GM12878 (cell line): ENCODE measurements at regions of chr9 and their contacts with region 1.

Region 1: GRCh38 chr9:17116400-17116837 is 18.4 kb upstream of the CNTLN start:
- DNase-seq: no peak
- ATAC-seq: no peak
- H3K4me3 ChIP-seq: no peak overlapping the region
- H3K27ac ChIP-seq: no peak overlapping the region
- H3K4me1 ChIP-seq: no peaks in the 10 kb centered on the region
- H3K27me3 ChIP-seq: no peaks in the 10 kb centered on the region
- CTCF ChIP-seq: peak in 1 of 3 experiments; percentile 15; a peak in 2 of 6 replicates
- EP300 ChIP-seq: no peak
- POLR2A ChIP-seq: no peak
- RAD21 ChIP-seq: no peak

Region 2: DNA sequence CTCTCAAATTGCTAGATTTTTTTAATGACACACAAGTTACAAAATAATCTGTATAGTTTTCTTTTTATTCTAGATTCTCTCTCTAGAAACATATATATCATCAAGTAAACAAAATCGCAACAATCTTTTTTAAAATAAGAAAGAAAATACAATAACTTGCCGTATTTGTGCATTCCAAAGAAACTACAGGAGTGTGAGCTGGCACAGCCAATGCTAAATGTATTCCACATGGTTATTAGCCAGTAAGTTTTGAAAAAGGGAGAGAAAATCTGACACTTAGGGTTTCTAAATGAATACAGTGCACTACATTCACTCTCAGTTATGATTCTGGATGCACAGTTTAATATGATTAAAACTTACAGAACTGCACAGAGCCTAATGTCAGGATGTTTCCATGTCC is 363.8 kb before region 1 on chr9:
- CTCF ChIA-PET with region 1: no interaction called
- POLR2A ChIA-PET with region 1: no interaction called
- RAD21 ChIA-PET with region 1: no interaction called
- SMC1A ChIA-PET with region 1: no interaction called
- in situ Hi-C with region 1: no loop called
- intact Hi-C with region 1: loop called (anchors 5 kb)
- DNase-seq: no peak
- ATAC-seq: no peak
- H3K4me3 ChIP-seq: no peak overlapping the region
- H3K27ac ChIP-seq: no peak overlapping the region
- H3K4me1 ChIP-seq: no peaks in the 10 kb centered on the region
- H3K27me3 ChIP-seq: no peaks in the 10 kb centered on the region
- CTCF ChIP-seq: no peak
- EP300 ChIP-seq: no peak
- POLR2A ChIP-seq: no peak
- RAD21 ChIP-seq: no peak

Region 3: DNA sequence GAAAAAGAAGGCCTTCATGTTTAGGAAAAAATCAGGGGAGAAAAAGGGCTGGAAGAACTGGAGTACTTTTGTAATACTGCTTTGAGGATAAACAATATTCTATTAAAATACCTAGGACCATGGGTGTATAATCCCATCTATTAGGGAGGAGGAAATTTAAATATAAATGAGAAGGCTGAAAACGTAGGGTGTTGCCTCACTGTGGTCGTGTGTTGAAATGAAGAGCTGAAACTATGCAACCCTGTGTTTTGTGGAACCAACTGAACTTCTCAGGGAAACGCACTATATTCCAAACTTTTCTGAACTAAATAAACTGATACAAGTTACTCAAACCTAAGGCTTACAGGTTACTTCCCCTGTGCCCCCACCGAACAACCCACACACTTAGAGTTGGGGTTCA is 13.9 kb after region 1 on chr9:
- CTCF ChIA-PET with region 1: interaction called, 12 read pairs
- POLR2A ChIA-PET with region 1: no interaction called
- RAD21 ChIA-PET with region 1: interaction called, 3 read pairs
- SMC1A ChIA-PET with region 1: interaction called, 3 read pairs
- in situ Hi-C with region 1: no loop called
- intact Hi-C with region 1: no loop called
- DNase-seq: no peak
- ATAC-seq: no peak
- H3K4me3 ChIP-seq: no peak overlapping the region
- H3K27ac ChIP-seq: no peak overlapping the region
- H3K4me1 ChIP-seq: no peaks in the 10 kb centered on the region
- H3K27me3 ChIP-seq: no peaks in the 10 kb centered on the region
- CTCF ChIP-seq: no peak
- EP300 ChIP-seq: no peak
- POLR2A ChIP-seq: no peak
- RAD21 ChIP-seq: no peak

Region 4: GRCh38 chr9:17402309-17402708 is 285.9 kb after region 1 on chr9:
- CTCF ChIA-PET with region 1: interaction called, 11 read pairs
- POLR2A ChIA-PET with region 1: no interaction called
- RAD21 ChIA-PET with region 1: interaction called, 3 read pairs
- SMC1A ChIA-PET with region 1: interaction called, 3 read pairs
- in situ Hi-C with region 1: no loop called
- intact Hi-C with region 1: no loop called
- DNase-seq: no peak
- ATAC-seq: no peak
- H3K4me3 ChIP-seq: no peak overlapping the region
- H3K27ac ChIP-seq: no peak overlapping the region
- H3K4me1 ChIP-seq: no peaks in the 10 kb centered on the region
- H3K27me3 ChIP-seq: no peaks in the 10 kb centered on the region
- CTCF ChIP-seq: no peak
- EP300 ChIP-seq: no peak
- POLR2A ChIP-seq: no peak
- RAD21 ChIP-seq: no peak

Region 5: DNA sequence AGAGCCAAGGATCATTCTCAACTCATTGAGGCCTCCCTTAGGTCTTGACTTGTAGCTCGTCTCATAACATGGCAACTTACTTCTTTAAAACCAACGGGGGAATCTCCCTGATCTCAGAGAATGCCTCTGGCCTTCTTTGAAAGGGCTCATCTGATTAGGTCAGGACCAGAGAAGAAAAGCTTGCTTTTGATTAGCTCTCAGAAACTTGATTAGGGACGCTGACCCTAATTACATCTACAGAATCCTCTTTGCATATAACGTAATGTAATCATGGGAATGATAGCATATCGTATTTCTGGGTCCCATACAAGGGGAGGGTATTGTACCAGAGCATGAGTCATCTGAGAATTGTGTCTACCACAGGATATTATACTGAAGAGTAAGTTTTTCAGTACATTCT is 337.3 kb after region 1 on chr9:
- CTCF ChIA-PET with region 1: interaction called, 5 read pairs
- POLR2A ChIA-PET with region 1: no interaction called
- RAD21 ChIA-PET with region 1: no interaction called
- SMC1A ChIA-PET with region 1: interaction called, 5 read pairs
- in situ Hi-C with region 1: loop called (anchors 10 kb)
- intact Hi-C with region 1: no loop called
- DNase-seq: no peak
- ATAC-seq: peak; percentile 49; the same call in 2 of the 3 replicates
- H3K4me3 ChIP-seq: no peak overlapping the region
- H3K27ac ChIP-seq: no peak overlapping the region
- H3K4me1 ChIP-seq: no peaks in the 10 kb centered on the region
- H3K27me3 ChIP-seq: no peaks in the 10 kb centered on the region
- CTCF ChIP-seq: no peak
- EP300 ChIP-seq: no peak
- POLR2A ChIP-seq: no peak
- RAD21 ChIP-seq: no peak

Region 6: GRCh38 chr9:17462869-17463464 is 346.5 kb after region 1 on chr9:
- CTCF ChIA-PET with region 1: interaction called, 72 read pairs
- POLR2A ChIA-PET with region 1: no interaction called
- RAD21 ChIA-PET with region 1: interaction called, 12 read pairs
- SMC1A ChIA-PET with region 1: interaction called, 36 read pairs
- in situ Hi-C with region 1: loop called (anchors 10 kb)
- intact Hi-C with region 1: loop called (anchors 1 kb)
- DNase-seq: no peak
- ATAC-seq: peak; percentile 66
- H3K4me3 ChIP-seq: no peak overlapping the region
- H3K27ac ChIP-seq: no peak overlapping the region
- H3K4me1 ChIP-seq: no peaks in the 10 kb centered on the region
- H3K27me3 ChIP-seq: no peaks in the 10 kb centered on the region
- CTCF ChIP-seq: peak; percentile 55 to 73 (median 58); a peak in 5 of 6 replicates
- EP300 ChIP-seq: no peak
- POLR2A ChIP-seq: no peak
- RAD21 ChIP-seq: peak; percentile 81